SK-N-SH (cell line): ENCODE measurements at regions of chr2 and their contacts with region 1.

Region 1: DNA sequence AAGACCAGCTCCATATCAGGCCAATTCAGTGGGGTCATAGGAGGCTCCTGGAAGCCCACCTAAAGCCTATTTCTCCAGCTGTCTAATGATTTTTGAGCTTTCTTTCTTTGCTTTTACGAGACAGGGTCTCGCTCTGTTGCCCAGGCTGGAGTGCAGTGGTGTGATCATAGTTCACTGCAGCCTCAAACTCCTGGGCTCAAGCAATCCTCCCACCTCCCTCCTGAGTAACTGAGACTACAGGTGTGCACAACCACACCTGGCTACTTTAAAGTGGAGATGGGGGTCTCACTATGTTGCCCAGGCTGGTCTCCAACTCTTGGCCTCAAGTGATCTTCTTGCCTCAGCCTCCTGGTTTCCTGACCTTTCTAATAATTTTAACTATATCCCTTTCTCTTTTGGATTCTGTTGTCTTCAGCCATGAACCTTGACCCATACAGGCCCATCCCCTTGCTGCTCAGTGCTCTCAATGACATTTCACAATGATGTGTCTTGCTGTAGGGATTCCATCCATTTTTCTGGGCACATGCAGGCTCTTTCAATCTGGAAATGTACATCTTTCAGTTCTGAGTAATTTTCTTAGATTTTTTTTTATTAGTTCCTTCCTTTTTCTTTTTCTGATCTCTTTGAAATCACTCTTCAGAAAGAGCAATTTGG is 29.7 kb downstream of the GNLY start:
- DNase-seq: no peak
- H3K4me3 ChIP-seq: no peak overlapping the region
- H3K27ac ChIP-seq: no peak overlapping the region
- H3K4me1 ChIP-seq: peaks cover 0 to 16% of the 10 kb centered on the region in 2 experiments; a peak in 2 of 4 replicates
- H3K27me3 ChIP-seq: no peaks in the 10 kb centered on the region
- CTCF ChIP-seq: no peak
- EP300 ChIP-seq: no peak
- RAD21 ChIP-seq: no peak

Region 2: GRCh38 chr2:85741833-85742455 is 18.1 kb after region 1 on chr2:
- CTCF ChIA-PET with region 1: interaction called, 168 read pairs
- POLR2A ChIA-PET with region 1: no interaction called
- DNase-seq: peak; percentile 77
- H3K4me3 ChIP-seq: no peak overlapping the region
- H3K27ac ChIP-seq: peak overlapping the region; percentile 95 to 96
- H3K4me1 ChIP-seq: peaks cover 53 to 54% of the 10 kb centered on the region in 2 experiments
- H3K27me3 ChIP-seq: no peaks in the 10 kb centered on the region
- CTCF ChIP-seq: no peak
- EP300 ChIP-seq: peak in 1 of 2 experiments; percentile 81; a peak in 1 of 4 replicates
- RAD21 ChIP-seq: no peak